ENCODE measurements at regions of chr4 and their contacts with region 1.

Region 1: DNA sequence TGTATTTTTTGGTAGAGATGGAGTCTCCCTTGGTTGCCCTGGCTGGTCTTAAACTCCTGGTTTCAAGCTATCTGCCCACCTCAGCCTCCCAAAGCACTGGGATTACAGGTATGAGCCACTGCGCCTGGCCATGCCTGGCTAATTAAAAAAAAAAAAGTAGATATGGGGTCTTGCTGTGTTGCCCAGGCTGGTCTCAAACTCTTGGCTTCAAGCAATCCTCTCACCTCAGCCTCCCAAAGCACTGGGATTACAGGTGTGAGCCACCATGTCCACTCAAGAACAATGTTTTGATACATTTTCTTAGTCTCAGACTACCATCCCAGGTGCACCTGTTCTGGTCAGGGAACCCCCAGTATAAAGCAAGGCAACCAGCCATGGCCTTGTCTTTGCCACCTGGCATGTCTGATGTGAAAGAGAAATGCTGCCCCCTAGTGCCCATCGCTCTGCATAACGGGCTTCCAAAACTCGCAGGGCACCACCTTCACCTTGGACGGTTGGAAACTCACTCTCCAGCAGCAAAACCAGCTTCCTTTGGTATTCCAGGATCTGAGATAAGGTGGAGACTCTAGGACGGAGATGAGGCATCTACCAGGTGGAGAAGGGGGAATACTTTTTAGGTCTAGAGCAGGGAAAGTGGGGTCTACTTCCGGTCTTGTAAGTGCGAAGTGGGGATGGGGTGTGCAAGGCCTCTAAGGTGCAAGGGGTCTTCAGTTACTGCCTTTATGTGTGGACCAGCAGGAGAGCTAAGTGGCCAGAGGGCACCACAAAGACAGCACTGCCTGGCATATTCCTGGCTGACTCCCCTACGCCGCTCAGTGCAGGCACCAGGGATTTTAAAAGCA is 47.7 kb upstream of the AFAP1 start:
- DNase-seq: no peak
- H3K4me3 ChIP-seq: no peak overlapping the region
- H3K27ac ChIP-seq: no peak overlapping the region
- H3K27me3 ChIP-seq: peaks cover 2% of the 10 kb centered on the region
- CTCF ChIP-seq: peak; percentile 91

Region 2: GRCh38 chr4:7761720-7762119 is 225.6 kb before region 1 on chr4:
- CTCF ChIA-PET with region 1: interaction called, 25 read pairs
- POLR2A ChIA-PET with region 1: no interaction called
- DNase-seq: no peak
- H3K4me3 ChIP-seq: no peak overlapping the region
- H3K27ac ChIP-seq: no peak overlapping the region
- H3K27me3 ChIP-seq: no peaks in the 10 kb centered on the region
- CTCF ChIP-seq: peak; percentile 74

Region 3: GRCh38 chr4:7924163-7924562 is 63.2 kb before region 1 on chr4:
- CTCF ChIA-PET with region 1: interaction called, 10 read pairs
- POLR2A ChIA-PET with region 1: no interaction called
- DNase-seq: no peak
- H3K4me3 ChIP-seq: no peak overlapping the region
- H3K27ac ChIP-seq: no peak overlapping the region
- H3K27me3 ChIP-seq: no peaks in the 10 kb centered on the region
- CTCF ChIP-seq: no peak

Region 4: DNA sequence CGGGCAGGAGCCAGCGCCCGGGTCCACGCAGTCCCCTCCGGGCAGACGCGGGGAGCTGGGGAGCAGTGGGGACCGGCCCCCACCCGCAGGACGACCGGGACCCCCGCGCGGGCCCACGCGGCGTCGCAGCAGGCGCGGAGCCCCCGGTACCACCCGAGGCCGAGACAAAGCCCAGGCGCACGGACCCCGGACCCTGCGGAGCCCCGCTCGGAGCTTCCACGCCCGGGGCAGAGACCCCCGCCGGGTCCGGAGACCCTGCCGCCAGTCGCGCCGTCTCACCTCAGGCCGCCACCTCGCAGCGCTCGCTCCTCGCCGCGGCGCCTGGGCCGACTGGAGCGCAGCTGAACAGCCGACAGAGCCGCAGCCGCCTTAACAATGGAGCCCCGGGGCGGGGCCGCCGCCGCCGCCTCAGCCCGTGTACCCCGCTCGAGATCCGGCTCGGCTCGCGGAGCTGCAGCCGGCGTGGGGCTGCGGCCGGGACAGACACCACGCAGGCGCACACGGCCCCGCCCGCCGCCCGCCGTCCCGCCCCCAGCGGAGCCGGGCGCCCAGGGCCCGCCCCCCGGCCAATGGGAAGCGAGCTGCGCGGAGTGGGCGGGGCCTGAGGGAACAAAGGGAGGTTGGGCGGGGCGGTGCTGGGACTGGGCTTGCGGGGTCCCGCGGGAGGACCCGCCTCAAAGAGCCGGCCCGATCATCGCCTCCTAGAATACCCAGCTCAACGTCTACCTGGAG is 47.8 kb before region 1 on chr4 and contains the start of gene AFAP1:
- CTCF ChIA-PET with region 1: interaction called, 12 read pairs
- POLR2A ChIA-PET with region 1: interaction called, 8 read pairs
- DNase-seq: peak; percentile 47
- H3K4me3 ChIP-seq: peak within 1 kb of the TSS; percentile 88
- H3K27ac ChIP-seq: peak within 1 kb of the TSS; percentile 86
- H3K27me3 ChIP-seq: no peaks in the 10 kb centered on the region
- CTCF ChIP-seq: no peak
- polyA plus RNA-seq, gene AFAP1: 57.9 and 61.7 TPM in 2 replicates

Region 5: DNA sequence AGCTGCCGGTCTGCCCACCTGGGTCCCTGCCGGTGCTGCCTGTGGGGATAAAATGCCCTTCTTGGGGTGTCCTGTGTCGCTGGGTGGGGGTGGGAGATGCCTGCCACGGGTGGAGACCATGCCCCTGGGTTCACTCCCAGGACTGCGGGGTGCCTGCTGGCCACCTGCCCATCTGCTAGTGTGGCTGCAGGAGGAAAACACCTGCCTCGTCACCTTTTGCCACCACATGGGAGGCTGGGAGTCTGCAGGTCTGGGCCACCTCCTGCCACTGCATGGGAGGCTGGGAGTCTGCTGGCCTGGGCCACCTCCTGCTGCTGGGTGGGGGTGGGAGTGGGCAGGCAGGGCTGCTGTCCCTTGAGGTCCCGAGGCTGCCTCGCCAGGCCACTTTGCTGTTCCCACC is 11.1 kb after region 1 on chr4:
- CTCF ChIA-PET with region 1: interaction called, 10 read pairs
- POLR2A ChIA-PET with region 1: no interaction called
- DNase-seq: no peak
- H3K4me3 ChIP-seq: no peak overlapping the region
- H3K27ac ChIP-seq: no peak overlapping the region
- H3K27me3 ChIP-seq: peaks cover 51% of the 10 kb centered on the region
- CTCF ChIP-seq: no peak

Region 6: DNA sequence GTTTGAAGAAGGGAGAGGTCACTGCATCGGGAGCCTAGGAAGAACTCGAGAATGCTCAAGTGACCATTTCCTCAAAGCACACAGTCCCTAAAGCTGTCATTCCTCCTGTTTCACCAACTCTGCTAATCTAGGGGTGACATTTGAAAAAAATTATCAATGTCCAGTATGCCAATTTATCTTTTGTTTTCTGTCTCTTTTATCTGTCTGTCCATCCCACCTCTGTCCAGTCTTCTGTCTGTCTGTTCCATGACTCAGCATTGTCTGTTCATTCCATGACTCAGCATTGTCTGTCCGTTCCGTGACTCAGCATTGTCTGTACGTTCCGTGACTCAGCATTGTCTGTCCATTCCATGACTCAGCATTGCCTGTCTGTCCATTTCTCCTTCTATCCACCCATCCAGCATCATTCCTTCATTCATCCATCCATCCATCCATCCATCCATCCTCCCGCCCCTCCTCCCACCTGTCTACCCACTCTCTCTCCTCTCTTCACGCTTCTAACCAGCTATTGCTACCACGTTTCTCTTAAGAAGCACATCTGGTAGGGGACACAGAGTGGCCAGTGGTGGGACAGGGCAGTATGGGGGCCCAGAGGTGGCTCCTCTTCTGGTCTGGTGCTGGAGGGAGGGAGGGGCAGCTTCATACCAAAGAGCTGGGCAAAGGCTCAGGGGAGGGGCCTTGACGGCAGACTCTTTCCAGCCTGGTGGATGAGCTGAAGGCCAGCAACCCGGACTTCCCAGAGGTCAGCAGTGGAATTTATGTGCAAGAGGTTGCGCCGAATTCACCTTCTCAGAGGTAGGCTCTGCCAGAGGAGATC is 316.3 kb after region 1 on chr4:
- CTCF ChIA-PET with region 1: no interaction called
- POLR2A ChIA-PET with region 1: no interaction called
- DNase-seq: peak; percentile 78
- H3K4me3 ChIP-seq: no peak overlapping the region
- H3K27ac ChIP-seq: peak overlapping the region; percentile 53
- H3K27me3 ChIP-seq: no peaks in the 10 kb centered on the region
- CTCF ChIP-seq: no peak

Measured in AG04450 (cell line).